Right cardiac atrium (tissue), 5 donors: ENCODE measurements at regions of chr12 and their contacts with region 1.

Region 1: DNA sequence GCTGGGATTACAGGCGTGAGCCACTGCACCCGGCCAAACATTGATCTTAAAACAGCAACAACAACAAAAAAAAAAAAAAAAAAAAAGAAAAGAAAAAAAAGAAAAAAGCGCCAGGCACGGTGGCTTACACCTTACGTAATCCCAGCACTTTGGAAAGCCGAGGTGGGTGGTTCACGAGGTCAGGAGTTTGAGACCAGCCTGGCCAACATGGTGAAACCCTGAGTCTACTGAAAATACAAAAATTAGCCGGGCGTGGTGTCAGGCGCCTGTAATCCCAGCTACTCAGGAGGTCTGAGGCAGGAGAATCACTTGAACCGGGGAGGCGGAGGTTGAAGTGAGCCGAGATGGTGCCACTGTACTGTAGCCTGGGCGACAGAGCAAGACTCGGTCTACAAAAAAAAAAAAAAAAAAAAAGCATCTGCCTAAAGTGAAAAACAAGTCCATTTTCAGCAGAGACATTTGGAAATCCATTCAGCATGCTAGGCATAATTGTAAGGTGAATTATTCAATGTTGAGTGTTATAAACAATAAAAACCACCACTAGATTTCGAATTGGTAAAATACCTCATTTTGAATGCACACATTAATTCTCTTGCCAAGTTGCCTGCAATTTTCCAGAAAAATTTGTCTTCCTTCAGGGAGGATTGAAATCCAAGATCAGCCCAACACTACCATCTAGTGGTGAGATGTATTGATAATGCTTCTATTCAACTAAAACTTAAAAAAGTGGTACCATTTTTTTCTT is 8.0 kb upstream of the CERS5 start:
- DNase-seq: no peak
- ATAC-seq: no peak
- H3K4me3 ChIP-seq: no peak overlapping the region
- H3K27ac ChIP-seq: no peak overlapping the region
- H3K4me1 ChIP-seq: no peaks in the 10 kb centered on the region
- H3K27me3 ChIP-seq: no peaks in the 10 kb centered on the region

Region 2: DNA sequence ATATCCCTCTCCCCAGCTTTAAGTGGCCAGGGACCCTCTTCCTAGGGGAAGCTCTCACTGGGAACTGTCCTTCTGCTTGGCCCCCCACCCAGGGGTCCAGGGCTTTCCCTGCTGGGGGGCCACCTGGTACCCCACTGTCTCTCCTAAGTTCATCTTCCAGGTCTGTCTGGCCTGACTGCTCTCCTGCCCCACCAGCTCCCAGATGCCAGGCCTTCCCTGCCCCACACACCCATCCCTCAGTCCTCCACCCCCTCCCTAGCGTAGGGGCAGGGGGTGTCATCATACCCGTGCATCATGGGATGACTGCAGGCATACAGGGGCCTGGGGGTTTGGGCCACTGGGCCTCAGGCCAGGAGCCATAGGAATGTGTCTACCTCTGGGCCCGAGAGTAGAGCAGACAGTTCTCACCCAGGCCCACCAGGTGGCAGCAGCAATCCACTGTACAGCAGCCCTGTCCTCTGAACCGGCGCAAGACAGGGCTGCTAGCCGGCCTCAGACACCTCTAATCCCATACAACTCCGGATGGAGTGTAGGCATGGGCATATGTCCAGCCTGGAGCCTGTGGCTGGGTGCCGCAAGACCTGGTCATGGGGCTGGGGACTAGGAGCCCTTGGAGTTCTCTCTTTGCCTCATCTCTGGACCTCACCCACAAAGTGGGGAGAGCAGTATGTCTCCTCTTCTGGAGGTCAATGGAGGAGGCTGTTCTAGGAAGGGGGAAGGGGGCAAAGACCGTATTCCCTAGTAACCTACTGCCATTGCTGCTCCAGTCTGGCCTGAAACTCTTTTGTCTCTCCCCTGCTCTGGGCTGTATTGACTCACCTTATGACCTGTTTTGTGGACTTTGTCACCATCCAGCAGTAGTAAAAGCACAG is 100.0 kb before region 1 on chr12:
- intact Hi-C with region 1: loop called in 3 of 4 experiments (anchors 2 to 10 kb)
- DNase-seq: peak; percentile 85 to 93 (median 93)
- ATAC-seq: peak; percentile 83 to 85
- H3K4me3 ChIP-seq: no peak overlapping the region
- H3K27ac ChIP-seq: no peak overlapping the region
- H3K4me1 ChIP-seq: no peaks in the 10 kb centered on the region
- H3K27me3 ChIP-seq: no peaks in the 10 kb centered on the region

Region 3: DNA sequence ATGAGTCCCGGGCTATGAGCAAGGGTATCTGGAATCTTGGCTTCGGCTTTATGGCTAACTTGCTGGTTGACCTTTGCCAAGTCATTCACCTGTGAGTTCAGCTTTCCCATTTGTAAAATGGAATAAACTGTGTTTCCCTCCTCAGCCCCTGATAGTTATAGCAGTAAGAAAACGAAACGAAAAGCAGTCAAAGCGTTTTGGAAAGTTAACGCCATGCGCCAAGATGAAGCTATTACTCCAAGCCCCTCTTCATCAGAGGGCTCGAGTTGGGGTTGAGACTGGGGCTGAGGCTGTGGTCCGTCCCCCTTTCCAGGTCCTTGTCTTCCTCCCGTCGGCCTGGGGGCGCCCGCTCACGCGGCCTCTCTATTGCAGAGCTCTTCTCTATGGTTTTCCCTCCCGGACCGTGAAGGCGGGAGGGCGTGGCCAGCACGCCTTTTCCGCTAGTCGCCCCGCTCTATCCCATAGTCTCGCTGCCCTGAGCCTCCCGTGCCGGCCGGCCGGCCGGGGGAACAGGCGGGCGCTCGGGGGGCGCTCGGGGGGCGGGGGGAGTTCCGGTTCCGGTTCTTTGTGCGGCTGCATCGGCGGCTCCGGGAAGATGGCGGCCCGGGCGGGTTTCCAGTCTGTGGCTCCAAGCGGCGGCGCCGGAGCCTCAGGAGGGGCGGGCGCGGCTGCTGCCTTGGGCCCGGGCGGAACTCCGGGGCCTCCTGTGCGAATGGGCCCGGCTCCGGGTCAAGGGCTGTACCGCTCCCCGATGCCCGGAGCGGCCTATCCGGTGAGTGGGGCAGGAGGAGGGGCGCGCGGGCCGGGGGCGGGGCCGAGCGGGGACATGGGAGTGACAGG is 90.1 kb before region 1 on chr12 and contains the start of gene SMARCD1:
- intact Hi-C with region 1: loop called in 2 of 4 experiments (anchors 5 to 10 kb)
- DNase-seq: peak; percentile 94 to 97 (median 97)
- ATAC-seq: peak; percentile 95 to 96
- H3K4me3 ChIP-seq: peak within 1 kb of the TSS; percentile 100
- H3K27ac ChIP-seq: peak within 1 kb of the TSS; percentile 97
- H3K4me1 ChIP-seq: no peaks in the 10 kb centered on the region
- H3K27me3 ChIP-seq: no peaks in the 10 kb centered on the region
- total RNA-seq, gene SMARCD1: 15.8 to 24.5 (median 19.7) TPM